Activated naive CD4-positive, alpha-beta T cell treated with anti-CD3 and anti-CD28 coated beads for 36 hours (primary cell): ENCODE measurements at regions of chr17 and their contacts with region 1.

Region 1: GRCh38 chr17:65656382-65657250 is 95.2 kb upstream of the AXIN2 start:
- DNase-seq: peak; percentile 84
- H3K4me3 Mint-ChIP-seq: no peak overlapping the region
- H3K27ac Mint-ChIP-seq: peak overlapping the region; percentile 56
- H3K4me1 Mint-ChIP-seq: peaks cover 35% of the 10 kb centered on the region
- H3K27me3 Mint-ChIP-seq: peaks cover 9% of the 10 kb centered on the region

Region 2: DNA sequence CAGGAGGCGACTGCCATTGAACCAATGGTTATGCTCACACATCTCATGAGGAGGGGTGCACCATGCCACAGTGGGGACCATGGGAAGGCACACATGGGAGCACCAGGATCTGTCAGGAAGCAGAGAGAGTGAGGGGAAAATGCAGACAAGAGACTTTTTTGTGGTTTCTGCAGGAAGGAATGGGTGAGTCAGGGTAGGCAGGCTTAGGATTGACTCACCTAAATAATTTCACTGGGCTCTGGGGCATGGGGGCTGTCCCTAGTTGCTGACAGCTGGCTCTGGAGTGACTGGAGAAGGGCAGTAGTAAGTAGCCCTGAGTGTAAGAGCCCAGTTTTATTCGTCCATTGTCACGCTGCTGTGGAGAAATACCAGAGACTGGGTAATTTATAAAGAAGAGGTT is 297.6 kb before region 1 on chr17:
- CTCF ChIA-PET with region 1: no interaction called
- intact Hi-C with region 1: loop called (anchors 1 kb)
- DNase-seq: peak; percentile 78
- H3K4me3 Mint-ChIP-seq: no peak overlapping the region
- H3K27ac Mint-ChIP-seq: no peak overlapping the region
- H3K4me1 Mint-ChIP-seq: peaks cover 20% of the 10 kb centered on the region
- H3K27me3 Mint-ChIP-seq: no peaks in the 10 kb centered on the region

Region 3: GRCh38 chr17:65537845-65538674 is 118.6 kb before region 1 on chr17:
- CTCF ChIA-PET with region 1: no interaction called
- intact Hi-C with region 1: no loop called
- DNase-seq: no peak
- H3K4me3 Mint-ChIP-seq: peak overlapping the region; percentile 63
- H3K27ac Mint-ChIP-seq: no peak overlapping the region
- H3K4me1 Mint-ChIP-seq: peaks cover 33% of the 10 kb centered on the region
- H3K27me3 Mint-ChIP-seq: no peaks in the 10 kb centered on the region

Region 4: DNA sequence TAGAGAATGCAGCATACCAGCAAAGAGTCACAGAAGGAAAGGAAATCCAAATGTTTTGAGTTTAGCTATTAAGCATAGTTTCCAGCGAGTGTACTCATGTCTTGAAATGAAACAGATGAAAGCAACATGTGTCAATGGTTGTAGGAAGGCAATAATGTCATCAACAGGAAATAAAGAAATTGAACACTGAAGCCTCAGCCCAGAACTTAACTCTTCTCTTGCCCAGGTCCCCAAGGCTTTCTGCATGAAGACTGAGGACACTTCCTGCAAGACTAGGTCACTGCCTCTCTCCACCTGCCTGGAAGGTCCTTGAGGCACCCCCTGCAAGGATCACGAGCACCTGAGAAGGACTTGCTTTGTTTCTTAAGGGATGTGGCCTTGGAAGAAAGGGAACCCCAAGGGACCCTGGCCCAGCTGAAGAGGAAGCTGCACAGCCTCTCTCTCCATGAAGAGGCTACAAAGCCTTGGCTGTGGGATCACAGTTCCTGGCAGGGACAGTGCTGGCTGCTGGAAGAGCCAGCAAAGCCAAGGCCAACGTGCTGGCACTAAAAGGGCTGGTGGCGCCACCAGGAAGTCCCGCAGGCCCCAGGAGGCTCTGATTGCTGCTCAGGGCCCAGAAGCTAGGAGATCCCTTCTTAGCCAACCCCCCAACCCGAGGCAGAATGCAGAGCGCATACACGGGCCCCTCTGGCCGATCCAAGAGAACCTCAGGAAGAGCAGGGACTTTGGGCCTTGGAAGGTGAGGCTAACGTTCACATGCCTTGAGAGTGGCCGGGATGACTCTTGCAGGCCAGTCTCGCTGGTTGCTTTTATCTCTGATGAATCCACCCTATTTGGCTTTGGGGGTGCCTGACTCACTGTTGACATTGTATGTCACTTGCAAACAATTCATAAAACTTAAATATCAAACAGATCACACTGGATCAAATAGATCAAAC is 71.7 kb before region 1 on chr17:
- CTCF ChIA-PET with region 1: interaction called, 4 read pairs
- intact Hi-C with region 1: loop called (anchors 1 kb)
- DNase-seq: peak; percentile 18
- H3K4me3 Mint-ChIP-seq: no peak overlapping the region
- H3K27ac Mint-ChIP-seq: peak overlapping the region; percentile 51
- H3K4me1 Mint-ChIP-seq: peaks cover 47% of the 10 kb centered on the region
- H3K27me3 Mint-ChIP-seq: no peaks in the 10 kb centered on the region

Region 5: GRCh38 chr17:65604070-65604469 is 52.5 kb before region 1 on chr17:
- CTCF ChIA-PET with region 1: no interaction called
- intact Hi-C with region 1: no loop called
- DNase-seq: no peak
- H3K4me3 Mint-ChIP-seq: no peak overlapping the region
- H3K27ac Mint-ChIP-seq: no peak overlapping the region
- H3K4me1 Mint-ChIP-seq: peaks cover 4% of the 10 kb centered on the region
- H3K27me3 Mint-ChIP-seq: peaks cover 3% of the 10 kb centered on the region

Region 6: GRCh38 chr17:65794572-65794971 is 138.0 kb after region 1 on chr17:
- CTCF ChIA-PET with region 1: interaction called, 3 read pairs
- intact Hi-C with region 1: loop called (anchors 1 kb)
- DNase-seq: no peak
- H3K4me3 Mint-ChIP-seq: no peak overlapping the region
- H3K27ac Mint-ChIP-seq: no peak overlapping the region
- H3K4me1 Mint-ChIP-seq: peaks cover 12% of the 10 kb centered on the region
- H3K27me3 Mint-ChIP-seq: peaks cover 2% of the 10 kb centered on the region

Region 7: DNA sequence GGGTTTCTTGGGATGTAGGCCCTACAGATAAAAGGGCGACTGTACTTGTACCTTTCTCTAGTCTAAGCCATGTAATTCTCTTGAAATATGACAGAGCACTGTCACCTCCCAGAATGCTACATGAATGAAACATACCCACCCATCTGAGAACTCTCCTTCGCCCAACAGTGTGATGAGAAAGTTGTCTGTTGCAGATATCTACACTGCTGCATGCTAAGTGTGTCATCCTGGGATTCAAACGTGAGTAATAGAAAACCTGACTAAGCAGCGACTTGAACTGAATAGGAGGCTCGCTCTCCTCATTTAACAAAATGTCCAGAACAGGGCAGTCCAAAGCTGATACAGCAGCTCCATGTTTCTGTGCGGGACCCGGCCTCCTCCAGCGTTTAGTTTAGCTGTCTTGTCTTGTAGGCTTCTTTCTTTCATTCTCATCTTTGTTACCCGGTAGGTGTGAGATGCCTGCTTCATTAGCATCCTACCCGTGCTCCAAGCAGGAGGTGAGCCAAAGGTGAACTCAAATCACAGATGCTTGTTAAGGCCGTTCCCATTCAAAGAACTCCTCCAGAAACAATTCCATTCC is 857.7 kb after region 1 on chr17:
- CTCF ChIA-PET with region 1: no interaction called
- intact Hi-C with region 1: loop called (anchors 5 kb)
- DNase-seq: peak; percentile 42
- H3K4me3 Mint-ChIP-seq: no peak overlapping the region
- H3K27ac Mint-ChIP-seq: no peak overlapping the region
- H3K4me1 Mint-ChIP-seq: peaks cover 89% of the 10 kb centered on the region
- H3K27me3 Mint-ChIP-seq: no peaks in the 10 kb centered on the region